Pancreas (tissue), 10 donors: ENCODE measurements at regions of chr12 and their contacts with region 1.

Region 1: GRCh38 chr12:9750276-9751203 is 10.2 kb downstream of the CD69 start:
- DNase-seq: no peak
- ATAC-seq: peak; percentile 79 to 96 (median 90)
- H3K4me3 ChIP-seq: peak overlapping the region in 1 of 4 donors; percentile 2
- H3K27ac ChIP-seq: no peak overlapping the region
- H3K4me1 ChIP-seq: peaks cover 0 to 4% (median 0%) of the 10 kb centered on the region in 3 donors
- H3K27me3 ChIP-seq: no peaks in the 10 kb centered on the region
- CTCF ChIP-seq: peak; percentile 73 to 91 (median 80)

Region 2: DNA sequence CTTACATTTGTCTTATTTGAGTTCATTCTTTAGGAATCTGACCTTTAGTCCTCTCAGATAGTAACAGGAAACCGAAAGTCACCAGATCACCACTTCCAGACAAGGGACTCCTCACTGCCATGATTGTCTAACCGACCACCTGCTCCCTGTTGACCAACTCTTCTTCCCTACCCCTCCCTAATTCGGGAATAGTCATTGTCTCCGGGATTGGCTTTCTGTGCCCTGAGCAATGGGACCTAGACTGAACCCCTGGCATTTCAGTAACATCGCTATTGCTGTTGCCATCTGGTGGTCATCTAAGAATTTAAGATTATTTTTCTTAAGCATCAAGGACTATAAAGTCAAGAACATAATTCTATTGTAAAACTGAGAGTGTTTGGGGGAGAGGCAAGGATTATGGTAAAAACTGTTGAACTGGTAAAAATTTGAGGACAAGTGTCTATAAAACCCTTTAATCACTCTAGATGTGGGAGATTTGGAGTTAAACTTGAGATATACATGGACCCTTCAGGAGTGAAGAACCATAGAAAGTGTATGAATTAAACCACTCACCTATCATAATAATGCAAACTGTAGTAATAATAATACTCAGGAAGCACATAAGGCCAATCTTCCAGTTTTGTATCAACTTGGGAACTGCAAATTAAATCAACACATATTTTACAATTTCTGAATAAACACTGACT is 175.3 kb after region 1 on chr12:
- intact Hi-C with region 1: loop called in 2 of 3 experiments (anchors 10 kb)
- DNase-seq: peak in 1 of 6 donors; percentile 10
- ATAC-seq: peak in 3 of 4 donors; percentile 62 to 77 (median 67)
- H3K4me3 ChIP-seq: peak overlapping the region in 1 of 4 donors; percentile 27
- H3K27ac ChIP-seq: no peak overlapping the region
- H3K4me1 ChIP-seq: no peaks in the 10 kb centered on the region
- H3K27me3 ChIP-seq: peaks cover 0 to 8% (median 0%) of the 10 kb centered on the region in 4 donors
- CTCF ChIP-seq: peak in 1 of 4 donors; percentile 15

Region 3: DNA sequence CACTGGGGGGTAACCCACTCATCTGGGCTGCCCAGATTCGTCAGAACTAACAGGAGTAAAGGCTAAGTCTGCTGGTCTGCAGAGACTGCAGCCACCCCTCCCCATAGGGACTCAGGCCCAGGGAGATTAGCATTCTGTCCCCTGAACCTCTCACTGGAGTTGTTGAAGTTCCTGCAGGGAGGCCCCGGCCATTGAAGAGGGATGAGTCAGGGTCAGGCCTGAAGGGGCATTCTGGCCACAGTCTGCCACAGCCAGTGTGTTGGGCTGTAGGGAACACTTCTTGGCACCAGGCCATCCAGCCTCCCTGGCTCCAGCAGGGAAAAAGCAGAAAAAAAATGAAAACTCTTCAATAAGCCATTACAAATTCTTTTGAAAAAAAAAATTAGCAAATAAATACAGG is 604.0 kb after region 1 on chr12:
- intact Hi-C with region 1: no loop called
- DNase-seq: no peak
- ATAC-seq: no peak
- H3K4me3 ChIP-seq: no peak overlapping the region
- H3K27ac ChIP-seq: no peak overlapping the region
- H3K4me1 ChIP-seq: no peaks in the 10 kb centered on the region
- H3K27me3 ChIP-seq: no peaks in the 10 kb centered on the region
- CTCF ChIP-seq: no peak

Region 4: GRCh38 chr12:10613349-10614055 is 863.0 kb after region 1 on chr12 and contains the start of gene MAGOHB:
- intact Hi-C with region 1: no loop called
- DNase-seq: peak; percentile 92 to 99 (median 96)
- ATAC-seq: peak; percentile 96 to 99 (median 99)
- H3K4me3 ChIP-seq: peak within 1 kb of the TSS; percentile 60 to 83 (median 68)
- H3K27ac ChIP-seq: peak within 1 kb of the TSS; percentile 77 to 89 (median 82)
- H3K4me1 ChIP-seq: peaks cover 0 to 11% (median 0%) of the 10 kb centered on the region in 3 donors
- H3K27me3 ChIP-seq: no peaks in the 10 kb centered on the region
- CTCF ChIP-seq: no peak
- total RNA-seq, gene MAGOHB: 5.4 to 11.4 (median 8.6) TPM